Activated B cell treated with CpG ODN at 0.5 μM for 24 hours (primary cell): ENCODE measurements at regions of chr3 and their contacts with region 1.

Region 1: GRCh38 chr3:70358978-70359580 is 46.6 kb upstream of the MDFIC2 start:
- DNase-seq: no peak
- ATAC-seq: no peak
- H3K4me3 Mint-ChIP-seq: no peak overlapping the region
- H3K27ac Mint-ChIP-seq: no peak overlapping the region
- H3K4me1 Mint-ChIP-seq: no peaks in the 10 kb centered on the region
- H3K27me3 Mint-ChIP-seq: no peaks in the 10 kb centered on the region
- CTCF ChIP-seq: no peak

Region 2: DNA sequence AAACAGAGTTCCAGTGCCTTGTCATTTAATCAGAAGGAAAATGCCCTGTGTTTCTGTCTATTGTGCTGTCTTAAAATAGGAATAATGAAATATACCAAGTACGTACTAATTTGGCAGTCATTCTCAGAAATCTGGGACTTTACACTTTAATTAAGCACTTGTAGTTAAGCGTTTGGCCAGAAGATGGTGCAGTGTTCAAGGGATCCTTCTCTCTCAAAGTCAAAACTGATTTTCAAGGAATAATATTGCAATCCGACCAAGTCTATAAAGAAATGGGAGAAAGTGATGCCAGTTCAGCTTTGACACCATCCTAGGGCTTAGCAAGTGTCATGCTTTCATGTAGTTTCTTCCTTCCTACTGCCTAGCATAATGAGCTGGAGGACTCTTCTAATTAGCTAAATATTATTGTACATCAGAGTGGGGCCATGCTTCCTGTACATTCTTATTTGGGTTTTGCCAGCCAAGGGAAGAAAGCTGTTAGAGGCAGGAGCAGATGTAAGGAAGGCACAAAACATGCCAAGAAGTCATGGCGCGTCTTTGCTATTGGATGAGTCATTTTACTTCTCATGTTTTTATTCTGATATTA is 294.8 kb before region 1 on chr3:
- CTCF ChIA-PET with region 1: no interaction called
- POLR2A ChIA-PET with region 1: no interaction called
- intact Hi-C with region 1: loop called (anchors 1 kb)
- DNase-seq: no peak
- ATAC-seq: no peak
- H3K4me3 Mint-ChIP-seq: no peak overlapping the region
- H3K27ac Mint-ChIP-seq: no peak overlapping the region
- H3K4me1 Mint-ChIP-seq: no peaks in the 10 kb centered on the region
- H3K27me3 Mint-ChIP-seq: peaks cover 2% of the 10 kb centered on the region
- CTCF ChIP-seq: peak; percentile 79

Region 3: DNA sequence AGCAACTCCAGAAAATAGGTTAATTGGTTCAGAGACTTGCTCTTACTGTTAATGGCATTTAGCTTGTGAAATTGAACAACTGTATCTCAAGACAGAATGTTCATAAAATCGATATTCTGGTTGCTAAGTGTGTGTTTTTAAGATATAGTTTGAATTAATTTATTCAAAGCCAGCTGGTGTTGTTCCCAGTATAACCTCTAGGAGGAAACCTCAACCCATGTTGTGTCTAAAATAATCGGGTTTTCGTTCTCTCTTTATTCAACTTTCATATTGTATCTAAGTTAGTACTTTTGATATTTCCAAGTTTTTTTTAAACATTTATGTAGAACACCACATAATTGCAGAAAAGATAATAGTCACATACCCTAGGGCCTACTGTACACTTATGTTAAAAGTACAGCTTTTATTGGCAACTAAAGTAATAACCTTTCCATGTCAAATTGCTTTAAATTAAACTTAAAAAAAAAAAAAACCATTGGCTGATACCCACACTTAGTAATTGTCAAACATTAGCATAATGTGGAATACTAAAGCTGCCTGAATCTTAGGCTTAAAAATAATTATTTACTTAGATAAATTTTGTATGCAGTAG is 268.7 kb before region 1 on chr3:
- CTCF ChIA-PET with region 1: interaction called, 4 read pairs
- POLR2A ChIA-PET with region 1: no interaction called
- intact Hi-C with region 1: loop called (anchors 1 kb)
- DNase-seq: no peak
- ATAC-seq: no peak
- H3K4me3 Mint-ChIP-seq: no peak overlapping the region
- H3K27ac Mint-ChIP-seq: no peak overlapping the region
- H3K4me1 Mint-ChIP-seq: peaks cover 5% of the 10 kb centered on the region
- H3K27me3 Mint-ChIP-seq: peaks cover 2% of the 10 kb centered on the region
- CTCF ChIP-seq: peak; percentile 49

Region 4: GRCh38 chr3:70120357-70121121 is 238.5 kb before region 1 on chr3:
- CTCF ChIA-PET with region 1: interaction called, 19 read pairs
- POLR2A ChIA-PET with region 1: no interaction called
- intact Hi-C with region 1: loop called (anchors 1 kb)
- DNase-seq: peak; percentile 32
- ATAC-seq: peak; percentile 62
- H3K4me3 Mint-ChIP-seq: no peak overlapping the region
- H3K27ac Mint-ChIP-seq: no peak overlapping the region
- H3K4me1 Mint-ChIP-seq: no peaks in the 10 kb centered on the region
- H3K27me3 Mint-ChIP-seq: peaks cover 15% of the 10 kb centered on the region
- CTCF ChIP-seq: peak; percentile 37

Region 5: GRCh38 chr3:70298385-70298784 is 60.7 kb before region 1 on chr3:
- CTCF ChIA-PET with region 1: no interaction called
- POLR2A ChIA-PET with region 1: no interaction called
- intact Hi-C with region 1: loop called (anchors 10 kb)
- DNase-seq: no peak
- ATAC-seq: no peak
- H3K4me3 Mint-ChIP-seq: no peak overlapping the region
- H3K27ac Mint-ChIP-seq: no peak overlapping the region
- H3K4me1 Mint-ChIP-seq: no peaks in the 10 kb centered on the region
- H3K27me3 Mint-ChIP-seq: peaks cover 5% of the 10 kb centered on the region
- CTCF ChIP-seq: no peak